ENCODE measurements at regions of chr15 and their contacts with region 1.

Region 1: GRCh38 chr15:56918046-56918938 is at the start of gene TCF12:
- DNase-seq: peak; percentile 99
- H3K4me3 ChIP-seq: peak within 1 kb of the TSS; percentile 77
- H3K27ac ChIP-seq: peak within 1 kb of the TSS; percentile 99
- H3K4me1 ChIP-seq: peaks cover 25% of the 10 kb centered on the region
- H3K27me3 ChIP-seq: no peaks in the 10 kb centered on the region
- CTCF ChIP-seq: peak; percentile 60
- total RNA-seq, gene TCF12: 331 and 351 TPM in 2 replicates

Region 2: GRCh38 chr15:56672721-56673120 is 245.6 kb before region 1 on chr15:
- CTCF ChIA-PET with region 1: no interaction called
- POLR2A ChIA-PET with region 1: no interaction called
- intact Hi-C with region 1: no loop called
- DNase-seq: no peak
- H3K4me3 ChIP-seq: no peak overlapping the region
- H3K27ac ChIP-seq: no peak overlapping the region
- H3K4me1 ChIP-seq: no peaks in the 10 kb centered on the region
- H3K27me3 ChIP-seq: no peaks in the 10 kb centered on the region
- CTCF ChIP-seq: no peak

Region 3: GRCh38 chr15:56886932-56887781 is 31.1 kb before region 1 on chr15:
- CTCF ChIA-PET with region 1: no interaction called
- POLR2A ChIA-PET with region 1: no interaction called
- intact Hi-C with region 1: loop called (anchors 1 kb)
- DNase-seq: peak; percentile 95
- H3K4me3 ChIP-seq: peak overlapping the region; percentile 55
- H3K27ac ChIP-seq: peak overlapping the region; percentile 88
- H3K4me1 ChIP-seq: peaks cover 24% of the 10 kb centered on the region
- H3K27me3 ChIP-seq: no peaks in the 10 kb centered on the region
- CTCF ChIP-seq: no peak

Region 4: DNA sequence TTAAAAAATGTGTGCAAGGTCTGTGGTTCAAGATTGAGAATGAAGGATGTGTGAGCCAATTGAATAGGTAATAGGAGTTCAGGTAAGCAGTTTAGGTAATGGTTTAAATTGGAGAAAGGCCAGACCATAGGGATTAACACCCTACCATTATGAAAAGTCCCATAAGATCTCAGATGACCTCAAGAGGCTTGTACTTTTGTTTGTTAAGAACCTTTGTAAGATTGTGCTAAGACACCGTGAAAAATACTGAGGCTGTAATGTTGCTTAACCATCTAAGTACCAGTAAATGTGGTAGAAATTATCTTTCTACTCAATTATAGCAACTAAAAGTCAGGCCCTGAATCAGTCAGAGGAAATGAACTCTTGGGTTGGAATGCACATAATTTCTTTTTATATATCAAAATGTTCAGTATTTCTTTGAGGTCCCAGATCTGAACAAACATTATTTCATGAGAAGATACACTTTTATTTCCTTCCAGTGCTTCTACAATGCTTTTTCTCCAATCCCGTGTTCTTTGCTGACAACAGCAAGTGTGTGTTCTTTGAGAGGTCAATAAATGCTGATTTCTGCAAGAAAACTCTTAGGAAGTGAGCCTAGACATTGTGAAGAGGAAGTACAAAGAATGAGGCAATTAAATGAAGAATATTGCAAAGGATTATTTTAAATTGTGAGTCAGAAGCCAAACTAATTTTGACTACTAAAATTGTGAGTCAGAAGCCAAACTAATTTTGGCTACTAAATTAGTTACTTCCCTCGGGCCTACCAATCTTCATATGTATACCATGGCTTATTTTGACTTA is 66.6 kb after region 1 on chr15:
- CTCF ChIA-PET with region 1: no interaction called
- POLR2A ChIA-PET with region 1: no interaction called
- intact Hi-C with region 1: loop called (anchors 2 kb)
- DNase-seq: peak; percentile 92
- H3K4me3 ChIP-seq: peak overlapping the region; percentile 5
- H3K27ac ChIP-seq: peak overlapping the region; percentile 81
- H3K4me1 ChIP-seq: peaks cover 99% of the 10 kb centered on the region
- H3K27me3 ChIP-seq: no peaks in the 10 kb centered on the region
- CTCF ChIP-seq: no peak

Region 5: GRCh38 chr15:57138349-57138788 is 220.1 kb after region 1 on chr15:
- CTCF ChIA-PET with region 1: no interaction called
- POLR2A ChIA-PET with region 1: no interaction called
- intact Hi-C with region 1: loop called (anchors 2 kb)
- DNase-seq: peak; percentile 86
- H3K4me3 ChIP-seq: no peak overlapping the region
- H3K27ac ChIP-seq: no peak overlapping the region
- H3K4me1 ChIP-seq: peaks cover 69% of the 10 kb centered on the region
- H3K27me3 ChIP-seq: no peaks in the 10 kb centered on the region
- CTCF ChIP-seq: peak; percentile 87

Region 6: GRCh38 chr15:57218826-57219576 is 300.7 kb after region 1 on chr15:
- CTCF ChIA-PET with region 1: no interaction called
- POLR2A ChIA-PET with region 1: no interaction called
- intact Hi-C with region 1: loop called (anchors 5 kb)
- DNase-seq: peak; percentile 97
- H3K4me3 ChIP-seq: peak overlapping the region; percentile 58
- H3K27ac ChIP-seq: peak overlapping the region; percentile 77
- H3K4me1 ChIP-seq: peaks cover 60% of the 10 kb centered on the region
- H3K27me3 ChIP-seq: no peaks in the 10 kb centered on the region
- CTCF ChIP-seq: no peak

Region 7: DNA sequence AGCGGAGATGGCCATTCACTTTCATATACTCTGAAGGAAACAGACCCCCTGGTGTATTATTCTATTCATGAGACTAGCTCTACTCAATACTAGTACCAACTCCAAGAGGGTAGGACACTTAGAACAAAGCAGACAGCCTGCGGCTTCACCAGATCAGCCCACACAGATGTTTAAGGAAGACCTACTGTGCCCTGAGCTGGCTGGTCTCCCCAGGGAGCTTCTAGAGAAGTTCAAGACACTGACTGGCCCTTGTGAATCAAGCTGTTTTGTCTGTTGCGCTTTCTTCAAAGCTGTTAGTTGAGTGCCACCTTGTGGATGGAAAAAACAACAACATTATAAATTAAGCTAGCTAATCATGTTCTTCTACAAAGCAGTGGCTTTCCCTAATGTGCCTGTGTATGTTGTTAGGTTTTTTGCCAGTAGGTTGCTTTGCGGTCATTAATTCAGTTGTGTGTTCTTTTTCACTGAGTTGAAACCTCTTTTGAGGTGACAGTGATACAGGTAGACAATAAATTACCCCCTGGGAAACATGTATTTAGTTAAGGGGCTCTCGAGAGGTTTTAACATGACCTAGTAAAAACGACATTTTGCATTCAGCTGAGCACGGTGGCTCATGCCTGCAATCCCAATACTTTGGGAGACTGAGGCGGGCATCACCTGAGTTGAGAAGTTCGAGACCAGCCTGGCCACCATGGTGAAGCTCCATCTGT is 609.2 kb after region 1 on chr15:
- CTCF ChIA-PET with region 1: no interaction called
- POLR2A ChIA-PET with region 1: no interaction called
- intact Hi-C with region 1: loop called (anchors 10 kb)
- DNase-seq: peak; percentile 98
- H3K4me3 ChIP-seq: no peak overlapping the region
- H3K27ac ChIP-seq: no peak overlapping the region
- H3K4me1 ChIP-seq: peaks cover 19% of the 10 kb centered on the region
- H3K27me3 ChIP-seq: no peaks in the 10 kb centered on the region
- CTCF ChIP-seq: peak; percentile 75

Measured in A673 (cell line).